ENCODE measurements at regions of chr4 and their contacts with region 1.

Region 1: DNA sequence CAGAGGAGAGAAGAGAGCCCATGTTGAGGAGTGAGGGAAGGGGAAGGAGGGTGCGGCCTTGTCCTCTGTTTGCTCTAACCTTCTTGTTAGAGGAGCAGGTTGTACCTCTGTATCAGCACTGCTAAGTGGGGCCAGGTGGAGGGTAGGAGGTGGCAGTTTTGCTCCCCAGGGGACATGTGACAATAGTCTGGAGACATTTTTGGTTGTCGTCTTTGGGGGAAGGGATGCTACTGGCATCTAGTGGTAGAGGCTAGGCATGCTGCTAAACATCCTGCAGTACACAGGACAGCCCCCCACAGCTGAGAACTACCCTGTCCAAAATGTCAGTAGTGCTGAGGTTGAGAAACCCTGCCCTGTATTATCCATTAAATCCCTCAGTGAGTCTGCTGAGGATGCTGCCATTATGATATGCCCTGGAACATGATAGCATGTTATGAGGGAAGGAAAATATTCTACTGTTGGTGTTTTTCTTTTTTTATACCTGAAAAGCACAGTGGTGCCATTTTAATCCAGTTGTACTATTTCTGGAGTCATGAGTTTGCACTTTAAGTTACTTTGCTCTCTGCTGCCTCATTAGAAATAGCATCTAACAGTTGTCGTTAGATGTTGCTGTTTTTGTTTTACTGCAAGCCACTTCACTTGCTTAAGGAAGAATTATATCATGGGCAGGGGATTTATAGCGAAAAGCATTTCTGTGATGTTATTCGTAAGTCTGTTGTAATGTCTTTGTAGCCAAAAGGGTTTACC is 90.6 kb downstream of the LRP2BP start:
- DNase-seq: peak; percentile 27 to 30
- H3K4me3 ChIP-seq: no peak overlapping the region
- H3K27ac ChIP-seq: peak overlapping the region; percentile 63 to 70 (median 67)
- H3K4me1 ChIP-seq: peaks cover 33 to 41% of the 10 kb centered on the region in 2 donors
- H3K27me3 ChIP-seq: no peaks in the 10 kb centered on the region
- CTCF ChIP-seq: peak in 3 of 6 experiments; percentile 36 to 39 (median 38)
- POLR2A ChIP-seq: no peak

Region 2: DNA sequence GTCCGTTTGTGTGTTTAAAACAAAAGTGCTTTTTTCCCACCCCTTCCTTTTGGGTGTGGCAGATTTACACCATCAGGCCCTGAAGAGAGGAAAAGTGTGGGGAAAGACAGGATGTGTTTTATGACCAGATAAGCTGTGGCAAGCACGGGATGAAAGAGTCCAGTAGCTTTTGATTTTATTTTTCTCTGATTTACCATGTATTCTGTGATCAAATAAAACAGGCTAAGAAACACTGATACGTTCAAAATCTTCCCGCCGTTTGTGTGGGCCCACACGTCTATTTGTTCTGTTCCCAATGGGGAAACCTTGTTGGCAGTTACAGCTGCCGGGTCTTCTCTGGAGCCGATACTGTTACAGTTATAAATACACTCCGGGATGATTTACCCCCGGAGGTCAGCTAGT is 79.8 kb after region 1 on chr4:
- intact Hi-C with region 1: loop called (anchors 10 kb)
- DNase-seq: no peak
- H3K4me3 ChIP-seq: no peak overlapping the region
- H3K27ac ChIP-seq: peak overlapping the region in 2 of 3 donors; percentile 56 to 84
- H3K4me1 ChIP-seq: peaks cover 22 to 31% of the 10 kb centered on the region in 2 donors
- H3K27me3 ChIP-seq: no peaks in the 10 kb centered on the region
- CTCF ChIP-seq: no peak
- POLR2A ChIP-seq: no peak